ENCODE measurements at regions of chr9 and their contacts with region 1.

Region 1: GRCh38 chr9:136790927-136791641 is at the start of gene TMEM141:
- DNase-seq: peak; percentile 100
- H3K4me3 Mint-ChIP-seq: peak within 1 kb of the TSS; percentile 84
- H3K27ac Mint-ChIP-seq: peak within 1 kb of the TSS; percentile 81
- H3K4me1 Mint-ChIP-seq: peaks cover 32% of the 10 kb centered on the region
- H3K27me3 Mint-ChIP-seq: peaks cover 6% of the 10 kb centered on the region
- total RNA-seq, gene TMEM141: 37.2 and 39.0 TPM in 2 replicates

Region 2: GRCh38 chr9:136545966-136546698 is 245.0 kb before region 1 on chr9 and contains the start of gene NOTCH1:
- intact Hi-C with region 1: loop called (anchors 5 kb)
- DNase-seq: peak; percentile 83
- H3K4me3 Mint-ChIP-seq: peak within 1 kb of the TSS; percentile 94
- H3K27ac Mint-ChIP-seq: peak within 1 kb of the TSS; percentile 96
- H3K4me1 Mint-ChIP-seq: peaks cover 5% of the 10 kb centered on the region
- H3K27me3 Mint-ChIP-seq: no peaks in the 10 kb centered on the region
- total RNA-seq, gene NOTCH1: 115 and 121 TPM in 2 replicates

Region 3: GRCh38 chr9:136849038-136849959 is 58.2 kb after region 1 on chr9 and contains the start of gene PHPT1:
- intact Hi-C with region 1: loop called (anchors 1 kb)
- DNase-seq: peak; percentile 97
- H3K4me3 Mint-ChIP-seq: peak within 1 kb of the TSS; percentile 94
- H3K27ac Mint-ChIP-seq: peak within 1 kb of the TSS; percentile 89
- H3K4me1 Mint-ChIP-seq: no peaks in the 10 kb centered on the region
- H3K27me3 Mint-ChIP-seq: peaks cover 6% of the 10 kb centered on the region
- total RNA-seq, gene PHPT1: 134 and 139 TPM in 2 replicates

Region 4: DNA sequence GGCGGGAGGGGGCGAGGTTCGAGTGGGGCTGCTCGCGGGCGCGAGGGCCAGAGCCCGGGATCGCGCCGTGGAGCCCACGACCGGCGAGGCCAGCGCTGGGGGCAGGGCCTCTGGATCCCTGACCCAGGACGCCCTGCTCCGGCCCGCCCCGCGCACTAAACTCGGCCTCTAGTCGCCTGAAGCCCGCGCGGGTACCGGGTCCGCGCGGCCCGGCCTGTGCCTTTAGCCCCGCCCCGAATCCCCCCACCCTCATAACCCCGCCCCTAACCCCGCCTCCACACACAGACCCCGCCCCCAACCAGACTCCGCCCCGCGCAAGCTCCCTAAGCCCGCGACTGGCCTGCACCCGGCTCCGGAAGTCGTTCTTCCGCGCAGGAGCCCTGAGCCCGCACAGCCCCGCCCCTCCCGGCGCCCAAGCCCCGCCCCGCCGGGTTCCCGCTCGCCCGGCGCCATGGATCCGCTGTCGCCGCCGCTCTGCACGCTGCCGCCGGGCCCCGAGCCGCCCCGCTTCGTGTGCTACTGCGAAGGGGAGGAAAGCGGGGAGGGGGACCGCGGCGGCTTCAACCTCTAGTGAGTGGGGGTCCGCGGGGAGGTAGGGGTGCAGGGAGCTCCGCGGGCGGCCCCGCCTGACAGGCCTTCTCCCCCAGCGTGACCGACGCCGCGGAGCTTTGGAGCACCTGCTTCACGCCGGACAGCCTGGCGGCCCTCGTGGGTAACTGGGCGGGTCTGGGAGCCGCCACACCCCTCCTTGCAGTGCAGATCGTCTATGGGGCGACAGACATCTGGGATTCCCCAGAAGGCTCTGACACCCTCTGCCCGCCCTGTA is 201.1 kb after region 1 on chr9 and contains the start of gene PAXX:
- intact Hi-C with region 1: loop called (anchors 1 kb)
- DNase-seq: peak; percentile 93
- H3K4me3 Mint-ChIP-seq: peak within 1 kb of the TSS; percentile 87
- H3K27ac Mint-ChIP-seq: peak within 1 kb of the TSS; percentile 84
- H3K4me1 Mint-ChIP-seq: peaks cover 24% of the 10 kb centered on the region
- H3K27me3 Mint-ChIP-seq: peaks cover 26% of the 10 kb centered on the region
- total RNA-seq, gene PAXX: 79.4 and 84.5 TPM in 2 replicates

Region 5: DNA sequence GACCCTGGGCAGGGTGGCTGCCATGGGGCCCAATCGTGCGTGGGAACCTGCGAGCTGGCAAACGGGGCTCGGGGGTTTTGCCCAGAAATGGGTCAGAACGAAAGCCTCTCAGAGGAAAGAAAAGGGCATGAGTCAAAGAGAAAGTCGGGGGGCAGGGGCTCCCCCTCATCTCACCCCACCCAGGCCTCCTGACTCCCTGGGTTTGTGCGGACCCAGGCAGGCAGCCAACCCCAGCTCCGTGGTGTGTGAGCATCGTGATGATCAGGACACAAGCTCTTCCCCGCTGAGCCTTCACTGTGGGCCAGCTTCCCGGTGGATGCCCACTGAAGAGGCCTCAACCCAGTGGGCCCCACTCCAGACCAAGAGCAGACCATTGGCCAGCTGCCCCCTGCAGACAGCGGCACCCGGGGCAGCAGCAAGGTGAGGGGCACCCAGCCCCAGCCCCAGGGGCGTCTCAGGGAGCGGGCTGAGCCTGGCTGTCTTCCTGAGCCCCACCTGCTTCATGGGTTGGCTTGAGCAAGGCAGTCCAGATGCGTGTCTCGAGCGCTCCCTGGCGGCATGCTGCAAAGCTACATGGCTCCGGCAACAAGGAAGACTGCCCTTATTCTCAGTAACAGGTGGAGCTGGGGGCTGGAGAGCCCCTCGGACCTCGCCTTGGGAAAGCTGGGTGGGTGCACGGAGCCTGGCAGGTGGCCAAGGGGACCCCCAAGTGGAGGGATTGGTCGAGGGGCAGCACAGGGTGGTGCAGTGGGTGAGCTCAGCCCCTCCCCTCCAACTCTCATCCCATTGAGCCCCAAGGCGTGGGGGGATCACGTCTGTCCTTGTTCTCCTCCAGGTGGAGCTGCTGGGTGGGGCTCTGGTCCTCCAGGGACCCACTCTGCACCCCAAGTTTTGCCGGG is 244.0 kb after region 1 on chr9:
- intact Hi-C with region 1: loop called (anchors 1 kb)
- DNase-seq: peak; percentile 79
- H3K4me3 Mint-ChIP-seq: peak overlapping the region; percentile 67
- H3K27ac Mint-ChIP-seq: peak overlapping the region; percentile 87
- H3K4me1 Mint-ChIP-seq: peaks cover 29% of the 10 kb centered on the region
- H3K27me3 Mint-ChIP-seq: no peaks in the 10 kb centered on the region

Region 6: GRCh38 chr9:137150617-137151457 is 359.8 kb after region 1 on chr9:
- intact Hi-C with region 1: loop called (anchors 2 kb)
- DNase-seq: peak; percentile 60
- H3K4me3 Mint-ChIP-seq: no peak overlapping the region
- H3K27ac Mint-ChIP-seq: no peak overlapping the region
- H3K4me1 Mint-ChIP-seq: peaks cover 4% of the 10 kb centered on the region
- H3K27me3 Mint-ChIP-seq: peaks cover 2% of the 10 kb centered on the region

Region 7: GRCh38 chr9:137551651-137552384 is 760.7 kb after region 1 on chr9 and contains the start of gene MRPL41:
- intact Hi-C with region 1: loop called (anchors 5 kb)
- DNase-seq: peak; percentile 92
- H3K4me3 Mint-ChIP-seq: peak within 1 kb of the TSS; percentile 91
- H3K27ac Mint-ChIP-seq: peak within 1 kb of the TSS; percentile 82
- H3K4me1 Mint-ChIP-seq: peaks cover 14% of the 10 kb centered on the region
- H3K27me3 Mint-ChIP-seq: peaks cover 3% of the 10 kb centered on the region
- total RNA-seq, gene MRPL41: 53.8 and 56.0 TPM in 2 replicates